Right ventricle myocardium superior (tissue), 1 donor: ENCODE measurements at regions of chr11 and their contacts with region 1.

Region 1: GRCh38 chr11:86869966-86870570 is 69.7 kb downstream of the PRSS23 start:
- DNase-seq: peak; percentile 63
- ATAC-seq: peak; percentile 92

Region 2: GRCh38 chr11:86632499-86633269 is 237.4 kb before region 1 on chr11:
- intact Hi-C with region 1: no loop called
- DNase-seq: no peak
- ATAC-seq: no peak

Region 3: DNA sequence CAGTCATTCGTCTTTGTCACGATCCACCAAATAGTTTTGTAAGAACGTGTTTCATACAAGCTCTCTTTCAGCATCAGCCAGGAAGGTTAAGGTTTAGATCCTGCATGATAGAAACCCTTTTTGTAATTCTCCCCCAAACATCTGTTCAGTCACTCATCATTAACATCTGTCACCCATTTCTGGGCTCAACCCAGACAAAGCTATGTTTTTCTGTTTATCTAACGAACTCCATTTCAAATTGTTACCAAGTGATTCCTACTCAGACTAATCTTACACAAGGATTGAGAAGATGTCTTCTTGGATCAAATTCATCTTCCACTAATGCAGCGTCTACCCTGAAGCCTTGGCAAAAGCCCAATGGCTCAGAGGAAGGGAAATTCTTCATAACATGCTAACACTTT is 26.4 kb after region 1 on chr11:
- intact Hi-C with region 1: no loop called
- DNase-seq: no peak
- ATAC-seq: no peak

Region 4: GRCh38 chr11:86919557-86920210 is 49.6 kb after region 1 on chr11:
- intact Hi-C with region 1: loop called (anchors 2 kb)
- DNase-seq: no peak
- ATAC-seq: peak; percentile 70

Region 5: DNA sequence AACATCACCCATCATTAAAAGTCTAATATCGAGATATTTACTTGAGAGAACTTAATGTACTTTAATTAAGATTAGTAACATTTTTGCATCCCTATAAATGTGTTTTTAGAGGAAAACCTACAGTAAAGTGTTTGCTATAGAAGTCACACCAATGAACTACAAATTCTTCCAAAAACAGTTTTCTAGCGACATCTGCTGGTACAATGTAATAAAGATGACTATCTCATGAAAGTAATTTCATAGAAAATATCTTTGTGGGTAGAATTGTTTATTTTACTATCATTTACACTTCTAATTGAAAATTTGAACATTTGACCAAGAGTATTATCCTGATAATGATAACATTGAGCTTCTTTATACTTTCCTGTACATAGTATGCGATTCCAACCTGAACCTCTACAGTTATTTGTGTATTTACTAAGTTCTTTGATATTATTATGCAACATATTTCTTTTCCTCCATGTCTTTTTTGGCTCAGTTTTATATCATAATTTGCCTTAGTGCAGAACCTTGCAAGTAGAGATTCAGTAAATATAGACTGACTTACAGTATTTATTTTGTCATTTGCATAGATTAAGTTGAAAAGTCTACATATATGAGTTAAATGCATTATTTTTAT is 420.3 kb after region 1 on chr11:
- intact Hi-C with region 1: loop called (anchors 10 kb)
- DNase-seq: no peak
- ATAC-seq: peak; percentile 65